Activated T-helper 2 cell treated with anti-CD3 and anti-CD28 coated beads, Interferon-gamma antibody, Interleukin-2, Interleukin-4, amounts not matched to agents 10 μg/mL and 5 μg/mL and 100 μg/mL, durations not matched to agents 14 hours and 24 hours and 36 hours (primary cell): ENCODE measurements at regions of chr9 and their contacts with region 1.

Region 1: DNA sequence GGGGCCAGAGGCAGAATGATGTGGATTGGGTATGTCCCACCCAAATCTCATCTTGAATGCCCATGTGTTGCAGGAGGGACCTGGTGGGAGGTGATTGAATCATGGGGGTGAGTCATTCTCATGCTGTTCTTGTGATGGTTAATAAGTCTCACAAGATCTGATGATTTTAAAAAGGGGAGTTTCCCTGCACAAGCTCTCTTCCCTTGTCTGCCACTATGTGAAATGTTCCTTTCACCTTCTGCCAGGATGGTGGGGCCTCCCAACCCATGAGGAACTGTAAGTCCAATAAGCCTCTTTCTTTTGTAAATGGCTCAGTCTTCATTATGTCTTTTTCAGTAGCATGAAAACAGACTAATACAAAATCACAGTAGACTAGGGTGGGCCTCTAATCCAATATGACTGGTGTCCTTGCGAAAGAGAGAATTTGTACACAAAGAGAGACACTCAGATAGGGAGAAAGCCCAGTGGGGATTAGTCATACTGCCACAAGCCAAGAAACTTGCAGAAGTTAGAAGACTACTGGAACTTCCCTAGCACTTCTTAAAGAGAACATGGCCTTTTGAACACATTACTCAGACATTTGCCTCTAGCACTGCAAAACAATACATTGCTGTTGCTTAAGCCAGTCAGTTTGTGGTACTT is 68.4 kb downstream of the ANXA1 start:
- DNase-seq: no peak
- H3K4me3 Mint-ChIP-seq: no peak overlapping the region
- H3K27ac Mint-ChIP-seq: peak overlapping the region; percentile 84
- H3K4me1 Mint-ChIP-seq: peaks cover 30% of the 10 kb centered on the region
- H3K27me3 Mint-ChIP-seq: peaks cover 19% of the 10 kb centered on the region

Region 2: GRCh38 chr9:72292256-72292682 is 927.8 kb before region 1 on chr9:
- intact Hi-C with region 1: no loop called
- DNase-seq: no peak
- H3K4me3 Mint-ChIP-seq: no peak overlapping the region
- H3K27ac Mint-ChIP-seq: no peak overlapping the region
- H3K4me1 Mint-ChIP-seq: peaks cover 3% of the 10 kb centered on the region
- H3K27me3 Mint-ChIP-seq: peaks cover 18% of the 10 kb centered on the region

Region 3: DNA sequence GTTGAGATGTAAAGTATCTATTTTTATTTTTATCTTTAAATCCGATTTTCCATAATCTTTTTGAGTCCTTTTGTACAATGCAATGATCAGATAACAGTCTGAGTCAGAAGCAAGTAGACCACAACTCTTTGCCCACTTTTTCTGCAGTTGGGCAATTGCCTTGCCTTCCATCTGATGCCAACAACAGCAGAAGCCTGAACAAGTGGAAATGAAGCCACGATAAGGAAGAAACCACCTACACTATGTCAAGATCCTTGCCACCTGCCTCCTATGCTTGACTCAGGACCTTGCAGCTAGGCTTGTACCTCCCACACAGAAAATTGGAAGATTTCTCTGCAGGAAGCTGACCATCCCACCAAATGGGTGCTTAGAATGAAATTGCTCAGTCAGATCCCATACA is 10.1 kb after region 1 on chr9:
- intact Hi-C with region 1: loop called (anchors 1 kb)
- DNase-seq: no peak
- H3K4me3 Mint-ChIP-seq: no peak overlapping the region
- H3K27ac Mint-ChIP-seq: no peak overlapping the region
- H3K4me1 Mint-ChIP-seq: peaks cover 11% of the 10 kb centered on the region
- H3K27me3 Mint-ChIP-seq: peaks cover 8% of the 10 kb centered on the region

Region 4: GRCh38 chr9:74735761-74736160 is 1515.7 kb after region 1 on chr9:
- intact Hi-C with region 1: loop called (anchors 10 kb)
- DNase-seq: no peak
- H3K4me3 Mint-ChIP-seq: no peak overlapping the region
- H3K27ac Mint-ChIP-seq: no peak overlapping the region
- H3K4me1 Mint-ChIP-seq: peaks cover 2% of the 10 kb centered on the region
- H3K27me3 Mint-ChIP-seq: peaks cover 6% of the 10 kb centered on the region